ENCODE measurements at regions of chrX and their contacts with region 1.

Region 1: GRCh38 chrX:49754233-49754857 is 58.6 kb upstream of the PAGE1 start:
- DNase-seq: peak in 1 of 2 experiments; percentile 15
- H3K4me3 ChIP-seq: no peak overlapping the region
- H3K27ac ChIP-seq: no peak overlapping the region
- H3K4me1 ChIP-seq: no peaks in the 10 kb centered on the region
- H3K27me3 ChIP-seq: no peaks in the 10 kb centered on the region
- CTCF ChIP-seq: peak; percentile 51

Region 2: DNA sequence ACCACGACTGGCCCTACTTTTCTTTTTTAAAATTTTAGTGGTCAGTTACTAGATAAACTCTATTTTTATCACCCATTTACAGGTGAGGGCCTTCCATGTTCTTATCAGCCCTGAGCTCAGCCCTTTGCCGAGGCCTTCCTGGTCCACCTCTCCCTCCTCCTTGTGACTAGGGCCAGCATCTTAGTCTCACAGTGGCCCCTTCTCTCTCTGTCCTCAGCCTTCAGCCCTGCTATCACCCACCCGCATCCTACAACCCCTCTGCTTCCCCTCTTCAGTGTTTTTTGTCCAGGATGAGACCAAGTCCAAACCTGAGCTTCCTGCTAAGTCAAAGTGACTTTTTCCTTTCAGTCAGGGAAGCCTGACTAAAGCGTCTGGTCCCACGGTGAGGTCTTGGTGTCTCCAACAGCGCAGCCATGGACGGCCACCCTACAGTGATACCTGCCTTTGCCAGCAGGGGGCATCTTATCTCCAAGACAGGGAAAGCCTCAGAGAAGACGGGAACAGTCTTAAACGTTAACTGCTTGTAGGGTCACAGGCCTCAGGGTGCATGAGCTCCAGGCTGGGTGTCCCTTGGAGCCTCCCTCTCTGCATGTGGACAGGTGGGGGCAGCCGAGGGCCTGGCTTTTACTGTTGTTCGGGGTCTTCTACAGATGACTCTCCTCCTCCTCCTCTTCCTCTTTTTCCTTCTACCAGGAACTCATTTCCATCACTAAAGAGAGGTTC is 462.6 kb before region 1 on chrX:
- CTCF ChIA-PET with region 1: no interaction called
- POLR2A ChIA-PET with region 1: no interaction called
- intact Hi-C with region 1: loop called (anchors 5 kb)
- DNase-seq: peak in 1 of 2 experiments; percentile 33
- H3K4me3 ChIP-seq: no peak overlapping the region
- H3K27ac ChIP-seq: no peak overlapping the region
- H3K4me1 ChIP-seq: no peaks in the 10 kb centered on the region
- H3K27me3 ChIP-seq: no peaks in the 10 kb centered on the region
- CTCF ChIP-seq: peak; percentile 51

Region 3: DNA sequence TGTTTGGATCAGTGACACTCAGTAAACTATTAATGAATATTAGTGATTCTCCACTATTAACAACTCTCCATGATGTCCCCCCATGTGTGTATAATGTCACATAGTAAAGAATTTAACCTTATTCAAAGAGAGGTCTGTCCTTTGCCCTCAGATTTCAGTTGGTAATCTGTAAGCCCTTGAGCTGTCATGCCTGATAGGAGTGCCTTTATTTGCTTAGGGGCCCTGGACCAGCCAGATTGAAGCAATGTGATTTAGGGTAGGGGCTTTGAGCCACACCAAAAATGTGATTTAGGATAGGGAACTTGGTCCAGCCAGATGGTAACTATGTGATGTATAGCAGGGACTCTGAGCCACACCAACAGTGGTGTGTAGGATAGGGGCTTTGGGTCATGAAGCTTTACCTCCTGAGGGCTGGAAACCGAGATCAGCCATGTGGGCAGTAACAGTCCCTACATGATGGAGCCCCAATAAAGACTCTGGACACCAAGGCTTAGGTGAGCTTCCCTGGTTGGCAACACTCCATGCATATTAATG is 30.5 kb after region 1 on chrX:
- CTCF ChIA-PET with region 1: no interaction called
- POLR2A ChIA-PET with region 1: no interaction called
- intact Hi-C with region 1: no loop called
- DNase-seq: no peak
- H3K4me3 ChIP-seq: no peak overlapping the region
- H3K27ac ChIP-seq: no peak overlapping the region
- H3K4me1 ChIP-seq: no peaks in the 10 kb centered on the region
- H3K27me3 ChIP-seq: no peaks in the 10 kb centered on the region
- CTCF ChIP-seq: no peak